ENCODE measurements at regions of chr11 and their contacts with region 1.

Region 1: DNA sequence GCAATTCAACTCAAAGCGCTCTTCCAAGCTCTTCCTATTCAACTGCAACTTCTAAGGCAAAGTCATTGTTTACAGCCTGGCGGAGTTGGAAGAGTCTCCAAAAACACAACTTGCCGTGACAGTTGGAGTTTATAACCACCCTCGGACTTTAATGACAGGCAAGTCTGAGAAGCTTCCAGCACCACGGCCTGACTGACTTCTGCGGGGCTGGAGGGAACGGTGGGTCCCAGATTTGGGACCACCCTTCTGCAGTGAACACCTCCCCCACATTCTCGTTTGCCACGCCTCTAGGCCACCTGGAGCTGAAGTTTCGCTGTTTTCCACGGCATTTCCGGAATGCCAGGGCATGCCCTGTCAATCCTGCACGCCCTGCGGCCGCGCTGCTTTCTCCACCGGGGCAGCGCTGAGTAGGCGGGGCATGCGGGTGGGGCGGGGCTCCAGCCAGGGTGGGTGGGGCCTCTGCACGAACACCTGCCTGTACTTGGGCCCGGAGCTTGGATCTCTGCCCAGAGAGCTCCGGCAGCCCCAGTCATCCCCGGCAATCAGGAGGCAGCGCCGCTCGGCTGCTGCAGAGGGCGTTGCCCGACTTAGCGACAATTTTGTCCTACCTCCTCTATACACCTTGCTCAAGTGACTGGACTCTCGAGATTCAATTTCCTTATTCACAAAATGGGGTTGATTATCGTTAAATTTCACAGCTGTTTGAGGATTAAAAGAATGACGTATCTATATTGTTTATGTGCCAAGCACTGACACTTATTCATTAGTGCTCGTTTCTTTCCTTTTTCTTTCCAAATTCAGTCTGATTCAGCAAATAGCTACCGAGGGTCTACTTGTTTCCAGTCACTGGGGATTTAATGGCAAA is 48.7 kb upstream of the BIRC3 start:
- DNase-seq: peak; percentile 88
- H3K4me3 Mint-ChIP-seq: peak overlapping the region; percentile 78
- H3K27ac Mint-ChIP-seq: no peak overlapping the region
- H3K4me1 Mint-ChIP-seq: peaks cover 25% of the 10 kb centered on the region
- H3K27me3 Mint-ChIP-seq: peaks cover 46% of the 10 kb centered on the region

Region 2: GRCh38 chr11:102220728-102221467 is 47.7 kb before region 1 on chr11:
- intact Hi-C with region 1: no loop called
- DNase-seq: no peak
- H3K4me3 Mint-ChIP-seq: no peak overlapping the region
- H3K27ac Mint-ChIP-seq: no peak overlapping the region
- H3K4me1 Mint-ChIP-seq: no peaks in the 10 kb centered on the region
- H3K27me3 Mint-ChIP-seq: peaks cover 17% of the 10 kb centered on the region

Region 3: DNA sequence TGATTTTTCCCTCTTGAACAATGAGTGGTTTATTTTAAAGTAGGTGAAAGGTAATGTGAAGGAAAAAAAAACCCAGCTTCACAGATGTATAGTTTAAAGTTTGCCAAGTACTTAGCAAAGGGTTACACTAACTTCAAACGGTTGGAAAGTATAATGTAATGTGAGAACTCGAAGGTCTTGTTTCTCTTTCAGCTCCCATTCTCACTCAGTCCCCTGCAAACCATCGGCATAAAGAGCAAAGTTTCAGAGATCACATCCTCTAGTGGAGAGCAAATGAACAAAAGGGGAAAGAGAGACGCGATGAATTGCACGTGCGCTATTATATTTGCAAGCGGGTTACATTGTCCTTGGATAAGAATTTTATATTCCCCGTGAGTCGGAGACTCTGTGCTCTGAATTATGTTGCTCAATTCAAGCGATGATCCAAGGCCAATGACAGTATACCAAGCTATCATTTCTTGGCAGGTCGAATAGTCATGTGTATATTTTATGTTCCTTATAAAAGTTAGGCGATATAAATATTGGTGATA is 11.1 kb after region 1 on chr11:
- intact Hi-C with region 1: loop called (anchors 1 kb)
- DNase-seq: peak; percentile 69
- H3K4me3 Mint-ChIP-seq: peak overlapping the region; percentile 11
- H3K27ac Mint-ChIP-seq: no peak overlapping the region
- H3K4me1 Mint-ChIP-seq: peaks cover 8% of the 10 kb centered on the region
- H3K27me3 Mint-ChIP-seq: peaks cover 9% of the 10 kb centered on the region

Region 4: DNA sequence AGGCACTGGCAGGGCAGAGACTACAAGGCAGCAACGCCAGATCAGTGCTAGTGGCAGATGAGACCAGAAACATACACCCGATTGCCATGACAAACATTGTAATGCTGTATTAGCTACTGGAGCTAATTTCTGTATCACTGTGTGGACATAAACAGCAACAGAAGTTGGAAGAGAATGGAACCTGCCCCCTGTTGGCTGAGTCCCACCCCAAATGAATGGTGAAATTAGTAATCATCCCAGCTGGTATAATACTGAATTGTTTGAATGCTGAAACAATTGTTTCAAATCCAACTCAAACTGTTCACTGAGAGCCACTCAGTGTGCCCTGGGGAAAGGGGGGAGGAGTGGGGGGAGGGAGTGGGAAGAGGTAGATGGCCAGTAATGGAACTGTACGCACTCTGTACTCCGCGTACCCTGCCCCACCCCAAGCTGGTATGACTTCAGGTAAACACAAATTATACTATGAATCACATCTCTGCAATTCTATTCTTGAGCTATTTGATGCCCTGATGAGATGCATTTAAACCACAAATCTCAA is 37.6 kb after region 1 on chr11:
- intact Hi-C with region 1: no loop called
- DNase-seq: no peak
- H3K4me3 Mint-ChIP-seq: peak overlapping the region; percentile 58
- H3K27ac Mint-ChIP-seq: peak overlapping the region; percentile 81
- H3K4me1 Mint-ChIP-seq: peaks cover 47% of the 10 kb centered on the region
- H3K27me3 Mint-ChIP-seq: no peaks in the 10 kb centered on the region

Measured in activated CD4-positive, alpha-beta T cell treated with anti-CD3 and anti-CD28 coated beads, Interleukin-2, amount 10 ng/mL, durations not matched to agents 24 days and 14 days (primary cell).